ENCODE measurements at regions of chr3 and their contacts with region 1.

Region 1: DNA sequence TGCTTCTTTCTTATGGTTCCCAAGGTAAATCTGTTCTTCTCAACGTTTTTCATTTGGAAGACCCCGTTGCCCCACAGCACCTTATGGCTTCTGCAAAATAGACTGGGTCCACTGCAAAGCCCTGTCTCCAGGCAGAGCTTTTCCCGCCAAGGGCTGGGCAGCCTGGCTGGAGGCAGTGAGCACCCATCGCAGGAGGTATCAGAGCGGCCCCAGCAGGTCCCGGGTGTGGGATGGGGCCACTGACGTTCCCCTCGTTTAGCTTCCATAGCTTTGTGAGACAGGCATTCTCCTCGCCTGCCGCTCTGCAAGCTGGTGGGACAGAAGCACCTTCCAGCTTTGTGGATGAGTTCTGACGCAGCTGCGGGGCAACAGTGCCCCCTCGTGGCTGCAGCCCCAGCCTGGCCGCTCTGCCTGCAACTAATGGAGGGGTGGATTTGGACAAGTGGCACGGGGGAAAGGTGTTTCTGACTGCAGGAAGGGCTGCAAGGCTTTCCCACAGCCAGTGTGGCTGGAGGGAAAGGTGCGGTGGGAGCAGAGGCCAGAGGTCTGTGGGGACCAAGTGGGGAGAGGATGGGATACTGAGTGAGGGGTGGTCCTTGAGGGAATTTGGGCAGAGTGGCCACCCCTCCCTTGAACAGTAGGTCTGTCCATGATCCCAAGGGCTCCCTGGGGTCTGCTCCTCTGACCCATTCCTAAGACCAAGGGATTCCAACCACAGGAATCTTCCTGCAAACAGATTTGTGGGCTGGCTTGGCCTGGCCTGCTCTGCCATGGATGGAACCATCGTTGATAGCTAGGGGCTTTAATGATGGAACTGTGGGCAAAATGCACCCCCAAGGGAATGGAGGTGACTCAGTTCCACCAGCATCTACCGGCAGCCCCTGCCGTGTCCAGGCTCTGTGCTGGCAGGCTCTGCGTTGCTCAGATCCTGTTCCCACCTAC is 99.4 kb downstream of the FBLN2 start:
- DNase-seq: peak; percentile 58
- H3K4me3 ChIP-seq: no peak overlapping the region
- H3K27ac ChIP-seq: no peak overlapping the region
- H3K27me3 ChIP-seq: peaks cover 10% of the 10 kb centered on the region
- CTCF ChIP-seq: peak; percentile 100

Region 2: DNA sequence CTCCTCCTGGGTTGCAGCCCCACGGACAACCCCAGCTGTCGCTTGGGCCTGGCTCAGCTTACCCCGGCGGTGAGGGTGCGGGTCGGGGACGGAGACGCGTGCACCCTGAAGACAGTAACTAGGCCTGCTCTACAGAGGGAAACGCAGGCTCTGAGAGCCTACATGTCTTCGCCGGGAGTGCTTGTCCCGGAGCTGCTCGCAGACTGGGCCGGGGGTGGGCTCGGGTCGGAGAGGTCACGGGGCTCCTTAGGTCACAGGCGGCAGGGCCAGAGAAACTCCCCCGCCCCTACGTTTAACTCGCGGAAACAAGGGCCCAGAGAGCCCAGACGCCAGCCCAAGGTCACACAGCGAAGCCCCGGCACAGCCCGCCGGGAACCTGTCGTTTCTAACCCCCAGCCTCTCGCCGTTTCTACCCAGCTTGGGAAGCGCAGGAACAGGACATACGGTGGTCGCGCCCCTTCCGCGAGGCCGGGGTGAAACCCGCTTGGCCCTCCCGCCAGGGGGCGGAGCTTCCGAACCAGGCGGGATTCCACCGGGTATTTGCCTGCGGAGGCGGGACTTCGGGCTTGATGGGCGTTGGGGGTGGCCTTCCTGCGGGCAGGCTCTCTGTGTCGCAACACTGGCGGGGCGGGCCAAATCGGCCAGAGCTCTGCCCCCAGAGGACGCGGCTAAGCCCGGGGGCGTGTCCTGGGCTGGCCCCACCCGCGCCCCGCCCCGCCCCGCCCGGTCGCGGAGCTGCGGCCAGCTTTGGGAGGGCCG is 168.6 kb before region 1 on chr3 and contains the start of gene HDAC11:
- CTCF ChIA-PET with region 1: interaction called, 22 read pairs
- POLR2A ChIA-PET with region 1: no interaction called
- DNase-seq: peak; percentile 90
- H3K4me3 ChIP-seq: peak within 1 kb of the TSS; percentile 72
- H3K27ac ChIP-seq: peak within 1 kb of the TSS; percentile 21
- H3K27me3 ChIP-seq: peaks cover 6% of the 10 kb centered on the region
- CTCF ChIP-seq: no peak
- polyA plus RNA-seq, gene HDAC11: 7.1 and 7.5 TPM in 2 replicates

Region 3: DNA sequence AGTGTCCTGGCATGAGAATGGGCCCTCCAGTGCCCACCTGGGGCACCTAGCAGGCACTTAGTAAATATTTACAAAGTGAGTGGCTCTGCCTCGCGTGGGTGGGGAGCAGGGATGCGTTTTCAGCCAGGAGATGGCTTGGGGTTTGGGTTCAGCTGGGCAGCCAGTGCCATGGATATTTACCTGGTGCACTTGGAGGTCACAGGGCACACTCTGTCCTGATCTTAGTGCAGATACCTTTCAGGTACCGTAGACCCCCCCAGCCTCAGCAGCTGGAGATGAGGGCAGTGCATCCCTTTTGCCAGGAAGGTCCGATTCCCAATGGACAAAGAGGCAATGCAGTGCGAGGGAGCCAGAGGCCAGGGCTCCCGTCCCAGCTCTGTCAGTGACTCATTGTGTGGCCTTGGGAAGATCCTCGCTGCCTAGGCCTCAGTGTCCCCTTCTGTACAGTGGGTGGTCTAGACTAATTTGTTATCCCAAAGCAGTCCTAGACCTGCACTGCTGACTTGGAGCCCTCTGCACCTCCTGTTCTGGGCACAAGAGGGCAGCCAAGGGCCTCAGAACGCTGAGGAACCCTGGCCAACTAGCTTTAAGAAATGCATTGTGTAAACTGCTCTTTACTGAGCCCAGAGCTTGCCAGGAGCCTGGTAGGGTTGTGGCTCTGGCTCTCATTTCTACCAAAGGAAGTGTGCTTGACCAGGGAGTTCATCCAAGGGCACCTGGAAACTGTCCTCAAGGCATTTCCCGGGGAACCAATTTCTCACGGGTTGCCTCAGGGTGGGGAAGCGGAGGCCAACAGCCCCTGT is 152.2 kb before region 1 on chr3:
- CTCF ChIA-PET with region 1: interaction called, 695 read pairs
- POLR2A ChIA-PET with region 1: interaction called, 9 read pairs
- DNase-seq: peak; percentile 69
- H3K4me3 ChIP-seq: no peak overlapping the region
- H3K27ac ChIP-seq: no peak overlapping the region
- H3K27me3 ChIP-seq: no peaks in the 10 kb centered on the region
- CTCF ChIP-seq: peak; percentile 99

Region 4: GRCh38 chr3:13590841-13591520 is 57.4 kb before region 1 on chr3:
- CTCF ChIA-PET with region 1: interaction called, 12 read pairs
- POLR2A ChIA-PET with region 1: no interaction called
- DNase-seq: no peak
- H3K4me3 ChIP-seq: no peak overlapping the region
- H3K27ac ChIP-seq: no peak overlapping the region
- H3K27me3 ChIP-seq: no peaks in the 10 kb centered on the region
- CTCF ChIP-seq: no peak

Region 5: GRCh38 chr3:13687517-13687943 is 39.2 kb after region 1 on chr3:
- CTCF ChIA-PET with region 1: no interaction called
- POLR2A ChIA-PET with region 1: no interaction called
- DNase-seq: no peak
- H3K4me3 ChIP-seq: no peak overlapping the region
- H3K27ac ChIP-seq: no peak overlapping the region
- H3K27me3 ChIP-seq: peaks cover 6% of the 10 kb centered on the region
- CTCF ChIP-seq: no peak

Region 6: DNA sequence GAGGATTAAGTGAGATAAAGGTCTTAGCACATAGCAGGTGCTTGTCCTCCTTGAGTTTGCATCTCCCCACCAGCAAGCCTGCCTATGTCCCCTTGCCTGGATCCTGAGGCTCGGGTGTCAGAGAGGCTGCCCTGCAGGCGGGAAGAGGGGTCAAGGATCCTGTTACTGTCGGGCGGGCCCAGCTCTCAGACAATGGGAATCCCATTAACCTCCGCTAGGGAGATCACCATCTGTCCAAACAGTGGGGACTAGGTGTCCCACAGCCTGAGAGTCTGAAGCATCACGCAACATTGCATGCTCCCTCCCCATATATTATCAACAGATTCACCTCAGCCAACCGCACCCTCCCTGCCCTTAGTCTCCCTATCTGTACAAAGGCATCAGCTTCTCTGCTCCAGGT is 52.0 kb after region 1 on chr3:
- CTCF ChIA-PET with region 1: no interaction called
- POLR2A ChIA-PET with region 1: no interaction called
- DNase-seq: no peak
- H3K4me3 ChIP-seq: no peak overlapping the region
- H3K27ac ChIP-seq: no peak overlapping the region
- H3K27me3 ChIP-seq: no peaks in the 10 kb centered on the region
- CTCF ChIP-seq: no peak

Region 7: GRCh38 chr3:13711906-13712650 is 63.7 kb after region 1 on chr3:
- CTCF ChIA-PET with region 1: no interaction called
- POLR2A ChIA-PET with region 1: no interaction called
- DNase-seq: no peak
- H3K4me3 ChIP-seq: no peak overlapping the region
- H3K27ac ChIP-seq: no peak overlapping the region
- H3K27me3 ChIP-seq: no peaks in the 10 kb centered on the region
- CTCF ChIP-seq: no peak